ENCODE measurements at regions of chr17 and their contacts with region 1.

Region 1: GRCh38 chr17:1684378-1685189 is at the start of gene PRPF8:
- DNase-seq: peak; percentile 97 to 99
- ATAC-seq: peak; percentile 100
- H3K4me3 ChIP-seq: peak within 1 kb of the TSS; percentile 80 to 92 (median 80)
- H3K27ac ChIP-seq: peak within 1 kb of the TSS; percentile 91 to 95 (median 94)
- H3K4me1 ChIP-seq: peaks cover 21 to 28% of the 10 kb centered on the region in 2 donors
- H3K27me3 ChIP-seq: no peaks in the 10 kb centered on the region
- CTCF ChIP-seq: peak in 1 of 5 experiments; percentile 18
- POLR2A ChIP-seq: peak; percentile 97 to 99
- total RNA-seq, gene PRPF8: 127 to 261 (median 195) TPM

Region 2: DNA sequence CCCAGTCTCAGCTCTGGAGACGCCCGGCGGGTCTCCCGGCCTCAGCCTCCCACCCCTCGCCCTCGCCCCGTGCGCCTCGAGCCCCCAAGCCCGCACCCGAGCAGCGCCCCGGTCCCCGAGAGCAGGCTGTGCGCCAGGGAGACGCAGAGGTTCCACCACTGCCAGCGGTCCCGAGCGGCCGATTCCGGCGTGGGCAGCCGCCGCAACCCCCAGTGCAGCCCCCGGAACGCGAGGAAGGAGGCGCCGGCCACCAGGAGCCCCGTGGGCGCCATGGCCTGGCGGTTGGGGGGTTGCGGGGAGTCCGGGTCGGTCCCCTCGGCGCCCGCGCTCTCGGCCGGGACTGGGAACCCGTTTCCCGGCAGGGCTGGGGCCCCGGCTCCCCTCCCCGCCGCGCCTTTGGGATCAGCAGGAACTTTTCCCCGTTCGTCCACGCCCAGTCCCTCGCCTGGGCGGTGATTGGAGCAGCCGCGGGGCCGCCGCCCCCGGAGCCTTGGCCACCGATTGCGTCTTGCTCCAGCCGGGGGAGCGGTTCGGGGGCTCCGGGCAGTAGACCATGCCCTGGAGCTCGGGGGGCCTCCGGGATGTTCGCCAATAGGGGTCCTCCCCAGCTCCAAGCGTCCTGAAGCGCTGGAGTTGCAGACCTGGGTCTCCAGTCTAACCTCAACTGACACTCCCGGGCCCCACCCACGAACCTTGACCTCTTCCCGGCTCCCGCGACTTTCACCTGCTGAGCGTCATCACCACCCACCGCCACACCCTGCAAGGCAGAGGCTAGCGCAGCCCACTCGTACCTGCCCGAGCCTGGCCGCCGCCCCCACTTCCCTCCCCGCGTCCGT is 25.6 kb after region 1 on chr17 and contains the start of gene TLCD2:
- in situ Hi-C with region 1: no loop called
- intact Hi-C with region 1: loop called (anchors 1 kb)
- DNase-seq: peak; percentile 56 to 67
- ATAC-seq: peak; percentile 15 to 23
- H3K4me3 ChIP-seq: peak within 1 kb of the TSS; percentile 57 to 86 (median 64)
- H3K27ac ChIP-seq: peak within 1 kb of the TSS; percentile 85 to 100 (median 100)
- H3K4me1 ChIP-seq: peaks cover 27 to 47% of the 10 kb centered on the region in 2 donors
- H3K27me3 ChIP-seq: no peaks in the 10 kb centered on the region
- CTCF ChIP-seq: no peak
- POLR2A ChIP-seq: peak; percentile 37 to 63
- total RNA-seq, gene TLCD2: 0.66 to 0.95 (median 0.85) TPM

Region 3: GRCh38 chr17:2041561-2042366 is 357.2 kb after region 1 on chr17 and contains the start of gene OVCA2:
- in situ Hi-C with region 1: loop called in 1 of 4 experiments (anchors 25 kb)
- intact Hi-C with region 1: no loop called
- DNase-seq: peak; percentile 85 to 87
- ATAC-seq: peak; percentile 88 to 93
- H3K4me3 ChIP-seq: peak within 1 kb of the TSS; percentile 72 to 100 (median 80)
- H3K27ac ChIP-seq: peak within 1 kb of the TSS; percentile 85 to 97 (median 92)
- H3K4me1 ChIP-seq: peaks cover 26% of the 10 kb centered on the region in 2 donors
- H3K27me3 ChIP-seq: no peaks in the 10 kb centered on the region
- CTCF ChIP-seq: peak; percentile 48 to 69 (median 63)
- POLR2A ChIP-seq: peak; percentile 55 to 67
- total RNA-seq, gene OVCA2: 12.6 to 50.2 (median 34.4) TPM

Measured in gastrocnemius medialis (tissue), 4 donors.